Right ventricle myocardium superior (tissue), 1 donor: ENCODE measurements at regions of chr5 and their contacts with region 1.

Region 1: GRCh38 chr5:103119765-103120606 is at the starts of genes GIN1 and PPIP5K2:
- DNase-seq: peak; percentile 96
- ATAC-seq: peak; percentile 98
- total RNA-seq, gene GIN1: 16.2 TPM
- total RNA-seq, gene PPIP5K2: 43.9 TPM

Region 2: DNA sequence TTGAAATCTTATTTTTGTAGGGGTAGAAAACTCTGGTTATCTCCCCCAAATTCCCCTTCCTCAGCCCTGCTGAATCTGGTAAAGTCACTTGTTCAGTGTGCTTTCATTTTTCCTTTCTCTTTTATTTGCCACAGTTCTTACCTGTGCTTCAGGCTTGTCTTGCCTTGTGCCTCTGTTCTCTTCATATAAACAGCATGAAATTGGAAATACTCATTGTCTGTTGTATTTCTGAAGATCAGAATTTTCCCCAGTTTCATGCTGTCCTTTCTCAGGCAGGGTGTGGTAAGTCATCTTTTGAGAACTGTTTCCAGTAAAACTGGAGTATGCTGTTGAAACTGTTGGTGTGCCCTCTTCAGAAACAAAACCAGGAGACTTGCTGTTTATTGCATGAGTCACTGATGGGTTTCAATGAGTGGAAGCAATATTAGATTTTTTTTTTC is 357.9 kb before region 1 on chr5:
- intact Hi-C with region 1: loop called (anchors 10 kb)
- DNase-seq: no peak
- ATAC-seq: peak; percentile 30